IMR-90 (cell line): ENCODE measurements at regions of chr5 and their contacts with region 1.

Region 1: DNA sequence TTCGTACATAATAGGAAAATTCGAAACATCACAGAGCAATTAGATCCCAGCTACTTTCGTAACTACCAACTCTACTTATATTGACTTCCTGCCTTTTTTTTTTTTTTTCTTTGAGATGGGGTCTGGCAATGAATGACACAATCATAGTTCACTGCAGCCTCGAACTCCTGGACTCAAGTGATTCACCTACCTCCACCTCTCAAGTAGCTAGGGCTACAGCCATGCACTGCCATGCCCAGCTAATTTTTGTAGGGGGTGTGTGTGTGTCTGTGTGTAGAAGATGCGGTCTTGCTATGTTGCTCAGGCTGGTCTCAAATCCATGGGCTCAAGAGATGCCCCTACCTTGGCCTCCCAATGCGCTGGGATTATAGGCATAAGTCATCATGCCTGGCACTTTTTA is 5.8 kb upstream of the PAIP2 start:
- DNase-seq: no peak
- ATAC-seq: no peak
- H3K4me3 ChIP-seq: no peak overlapping the region
- H3K27ac ChIP-seq: no peak overlapping the region
- H3K4me1 ChIP-seq: peaks cover 4% of the 10 kb centered on the region
- H3K27me3 ChIP-seq: no peaks in the 10 kb centered on the region
- CTCF ChIP-seq: no peak
- POLR2A ChIP-seq: no peak
- RAD21 ChIP-seq: no peak

Region 2: DNA sequence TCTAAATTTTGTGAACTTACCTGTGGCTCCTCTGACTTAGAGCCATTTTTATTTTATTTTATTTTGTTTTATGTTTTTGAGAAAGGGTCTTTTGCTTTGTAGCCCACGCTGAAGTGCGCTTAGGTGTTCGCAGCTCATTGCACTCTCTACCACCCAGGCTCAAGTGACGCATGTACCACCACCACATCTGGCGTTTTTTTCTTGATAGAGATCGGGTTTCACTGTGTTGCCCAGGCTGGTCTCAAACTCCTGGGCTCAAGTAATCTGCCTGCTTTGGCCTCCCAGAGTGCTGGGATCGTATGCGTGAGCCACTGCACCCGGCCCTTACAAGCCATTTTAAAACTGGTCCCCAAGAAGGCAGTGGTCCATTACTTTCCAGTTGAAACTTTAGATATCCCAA is 23.7 kb before region 1 on chr5:
- CTCF ChIA-PET with region 1: no interaction called
- POLR2A ChIA-PET with region 1: no interaction called
- dilution Hi-C with region 1: no loop called
- in situ Hi-C with region 1: no loop called
- intact Hi-C with region 1: loop called (anchors 2 kb)
- DNase-seq: no peak
- ATAC-seq: no peak
- H3K4me3 ChIP-seq: no peak overlapping the region
- H3K27ac ChIP-seq: no peak overlapping the region
- H3K4me1 ChIP-seq: peaks cover 6% of the 10 kb centered on the region
- H3K27me3 ChIP-seq: no peaks in the 10 kb centered on the region
- CTCF ChIP-seq: no peak
- POLR2A ChIP-seq: no peak
- RAD21 ChIP-seq: no peak